GM12878 (cell line): ENCODE measurements at regions of chr5 and their contacts with region 1.

Region 1: GRCh38 chr5:56200856-56201666 is 32.1 kb downstream of the ANKRD55 start:
- DNase-seq: peak; percentile 90
- ATAC-seq: peak; percentile 100
- H3K4me3 ChIP-seq: no peak overlapping the region
- H3K27ac ChIP-seq: no peak overlapping the region
- H3K4me1 ChIP-seq: no peaks in the 10 kb centered on the region
- H3K27me3 ChIP-seq: no peaks in the 10 kb centered on the region
- CTCF ChIP-seq: peak; percentile 74 to 93 (median 78); a peak in 5 of 6 replicates
- EP300 ChIP-seq: no peak
- POLR2A ChIP-seq: no peak
- RAD21 ChIP-seq: peak; percentile 95

Region 2: GRCh38 chr5:55923177-55923771 is 277.8 kb before region 1 on chr5:
- CTCF ChIA-PET with region 1: interaction called, 10 read pairs
- POLR2A ChIA-PET with region 1: no interaction called
- RAD21 ChIA-PET with region 1: no interaction called
- SMC1A ChIA-PET with region 1: interaction called, 4 read pairs
- in situ Hi-C with region 1: no loop called
- intact Hi-C with region 1: no loop called
- DNase-seq: no peak
- ATAC-seq: peak; percentile 40
- H3K4me3 ChIP-seq: peak overlapping the region; percentile 49; the same call in 1 of the 2 replicates
- H3K27ac ChIP-seq: peak overlapping the region; percentile 15; the same call in 1 of the 2 replicates
- H3K4me1 ChIP-seq: peaks cover 17% of the 10 kb centered on the region
- H3K27me3 ChIP-seq: no peaks in the 10 kb centered on the region
- CTCF ChIP-seq: no peak
- EP300 ChIP-seq: no peak
- POLR2A ChIP-seq: no peak
- RAD21 ChIP-seq: no peak

Region 3: GRCh38 chr5:55982957-55983381 is 218.1 kb before region 1 on chr5:
- CTCF ChIA-PET with region 1: interaction called, 122 read pairs
- POLR2A ChIA-PET with region 1: interaction called, 14 read pairs
- RAD21 ChIA-PET with region 1: interaction called, 79 read pairs
- SMC1A ChIA-PET with region 1: interaction called, 110 read pairs
- in situ Hi-C with region 1: no loop called
- intact Hi-C with region 1: loop called (anchors 1 kb)
- DNase-seq: no peak
- ATAC-seq: peak; percentile 28
- H3K4me3 ChIP-seq: no peak overlapping the region
- H3K27ac ChIP-seq: no peak overlapping the region
- H3K4me1 ChIP-seq: peaks cover 1% of the 10 kb centered on the region
- H3K27me3 ChIP-seq: no peaks in the 10 kb centered on the region
- CTCF ChIP-seq: peak in 2 of 3 experiments; percentile 14 to 50; a peak in 3 of 6 replicates
- EP300 ChIP-seq: no peak
- POLR2A ChIP-seq: no peak
- RAD21 ChIP-seq: peak; percentile 38

Region 4: DNA sequence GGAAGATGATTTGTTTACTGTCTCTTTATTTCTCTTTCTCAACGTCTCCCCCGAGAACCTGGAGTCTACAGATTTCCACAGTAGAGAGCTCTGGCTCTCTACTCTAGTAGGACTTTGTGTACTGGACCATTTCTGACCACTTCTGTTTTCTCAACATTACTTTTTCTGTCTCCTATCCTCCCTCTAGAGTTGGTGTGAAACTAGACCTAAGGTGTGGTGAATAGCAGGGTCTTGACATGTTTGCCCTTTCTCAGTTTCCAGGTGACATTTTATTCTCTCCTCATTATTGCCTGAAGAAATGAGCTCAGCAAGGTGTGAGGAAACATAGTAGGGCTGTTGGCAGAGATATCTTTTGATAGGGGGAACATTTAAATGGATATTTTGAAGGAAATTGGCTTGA is 144.2 kb before region 1 on chr5:
- CTCF ChIA-PET with region 1: interaction called, 25 read pairs
- POLR2A ChIA-PET with region 1: no interaction called
- RAD21 ChIA-PET with region 1: interaction called, 9 read pairs
- SMC1A ChIA-PET with region 1: interaction called, 15 read pairs
- in situ Hi-C with region 1: no loop called
- intact Hi-C with region 1: no loop called
- DNase-seq: peak; percentile 85
- ATAC-seq: peak; percentile 78
- H3K4me3 ChIP-seq: 0 out of 2 replicates have a peak overlapping the region, but pooled peaks have one; percentile 8
- H3K27ac ChIP-seq: peak overlapping the region; percentile 47; the same call in 1 of the 2 replicates
- H3K4me1 ChIP-seq: peaks cover 41% of the 10 kb centered on the region
- H3K27me3 ChIP-seq: no peaks in the 10 kb centered on the region
- CTCF ChIP-seq: no peak
- EP300 ChIP-seq: peak in 1 of 2 experiments; percentile 48; a peak in 1 of 4 replicates
- POLR2A ChIP-seq: no peak
- RAD21 ChIP-seq: no peak

Region 5: GRCh38 chr5:56095579-56096102 is 105.4 kb before region 1 on chr5:
- CTCF ChIA-PET with region 1: interaction called, 12 read pairs
- POLR2A ChIA-PET with region 1: no interaction called
- RAD21 ChIA-PET with region 1: interaction called, 17 read pairs
- SMC1A ChIA-PET with region 1: interaction called, 29 read pairs
- in situ Hi-C with region 1: no loop called
- intact Hi-C with region 1: no loop called
- DNase-seq: peak; percentile 96
- ATAC-seq: peak; percentile 87
- H3K4me3 ChIP-seq: no peak overlapping the region
- H3K27ac ChIP-seq: peak overlapping the region; percentile 76
- H3K4me1 ChIP-seq: peaks cover 21% of the 10 kb centered on the region
- H3K27me3 ChIP-seq: no peaks in the 10 kb centered on the region
- CTCF ChIP-seq: no peak
- EP300 ChIP-seq: peak; percentile 79 to 90
- POLR2A ChIP-seq: no peak
- RAD21 ChIP-seq: no peak

Region 6: GRCh38 chr5:56148453-56148971 is 52.5 kb before region 1 on chr5:
- CTCF ChIA-PET with region 1: interaction called, 25 read pairs
- POLR2A ChIA-PET with region 1: interaction called, 11 read pairs
- RAD21 ChIA-PET with region 1: interaction called, 41 read pairs
- SMC1A ChIA-PET with region 1: interaction called, 28 read pairs
- in situ Hi-C with region 1: no loop called
- intact Hi-C with region 1: loop called (anchors 1 kb)
- DNase-seq: peak; percentile 96
- ATAC-seq: peak; percentile 92
- H3K4me3 ChIP-seq: no peak overlapping the region
- H3K27ac ChIP-seq: peak overlapping the region; percentile 54; the same call in 1 of the 2 replicates
- H3K4me1 ChIP-seq: peaks cover 23% of the 10 kb centered on the region
- H3K27me3 ChIP-seq: no peaks in the 10 kb centered on the region; a peak in 1 of 4 replicates
- CTCF ChIP-seq: no peak
- EP300 ChIP-seq: peak; percentile 89 to 92
- POLR2A ChIP-seq: no peak
- RAD21 ChIP-seq: no peak

Region 7: DNA sequence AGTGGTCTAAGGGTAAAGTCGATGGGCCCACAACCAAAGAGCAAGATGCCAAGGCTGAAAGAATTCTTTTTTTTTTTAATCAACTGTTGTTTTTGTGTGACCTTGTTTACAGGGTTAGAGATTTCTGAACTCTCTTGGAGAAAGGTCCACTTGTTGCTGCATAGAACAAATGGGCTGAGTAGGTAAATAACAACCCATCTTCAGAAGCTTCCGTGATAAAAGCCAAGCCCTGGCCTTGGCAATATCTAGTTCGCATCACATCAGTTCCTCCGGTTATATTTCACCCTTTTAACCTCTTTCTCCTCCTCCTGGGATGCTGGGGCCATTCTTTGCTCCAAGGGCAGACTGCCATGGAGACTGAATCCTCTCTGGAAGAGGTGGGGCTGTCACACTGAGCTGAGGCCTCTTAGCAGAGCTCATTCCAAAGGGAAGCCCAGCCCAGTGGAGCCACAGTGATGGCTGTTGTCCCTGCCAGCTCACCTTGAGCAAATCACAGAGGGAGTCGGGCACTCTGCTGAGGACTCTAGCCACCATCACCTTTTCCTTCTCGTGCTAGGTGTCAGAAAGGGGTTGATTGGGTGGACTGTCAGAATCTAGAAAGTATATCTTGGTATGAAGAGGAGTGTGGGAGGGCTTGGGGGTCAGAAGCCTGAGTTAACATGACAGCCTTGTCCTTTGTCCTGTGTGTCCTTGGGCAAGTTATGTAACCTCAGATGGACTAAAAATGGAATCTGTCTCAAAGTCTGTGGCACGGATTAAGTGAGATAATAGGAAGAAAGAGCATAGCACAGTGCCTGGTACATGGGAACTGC is 14.2 kb after region 1 on chr5:
- CTCF ChIA-PET with region 1: no interaction called
- POLR2A ChIA-PET with region 1: no interaction called
- RAD21 ChIA-PET with region 1: no interaction called
- SMC1A ChIA-PET with region 1: no interaction called
- in situ Hi-C with region 1: no loop called
- intact Hi-C with region 1: no loop called
- DNase-seq: no peak
- ATAC-seq: no peak
- H3K4me3 ChIP-seq: no peak overlapping the region
- H3K27ac ChIP-seq: no peak overlapping the region
- H3K4me1 ChIP-seq: no peaks in the 10 kb centered on the region
- H3K27me3 ChIP-seq: no peaks in the 10 kb centered on the region
- CTCF ChIP-seq: no peak
- EP300 ChIP-seq: no peak
- POLR2A ChIP-seq: no peak
- RAD21 ChIP-seq: no peak

Region 8: DNA sequence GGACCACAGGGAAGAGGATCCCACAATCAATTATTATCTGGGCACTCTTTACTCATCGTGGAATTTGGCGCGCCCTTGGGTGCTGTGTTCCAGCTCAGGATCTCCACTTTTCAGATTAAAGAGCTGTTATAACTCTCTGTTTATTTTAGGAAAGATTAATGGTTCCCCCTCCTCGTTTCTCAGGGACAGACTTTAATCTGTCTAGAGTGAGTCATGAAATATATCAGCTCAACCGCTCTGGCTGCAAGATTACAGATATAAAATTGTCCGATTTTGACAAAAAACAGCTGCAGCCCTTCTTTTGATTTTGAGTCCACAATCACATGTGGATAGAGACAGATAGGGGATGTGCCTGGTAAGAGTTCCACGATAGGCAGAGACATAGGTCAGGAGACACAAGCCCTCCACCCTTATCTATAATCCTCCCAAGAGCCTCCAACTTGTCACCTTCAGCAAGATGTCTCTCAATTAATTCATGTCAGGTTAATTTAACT is 109.7 kb after region 1 on chr5:
- CTCF ChIA-PET with region 1: no interaction called
- POLR2A ChIA-PET with region 1: no interaction called
- RAD21 ChIA-PET with region 1: no interaction called
- SMC1A ChIA-PET with region 1: no interaction called
- in situ Hi-C with region 1: no loop called
- intact Hi-C with region 1: no loop called
- DNase-seq: no peak
- ATAC-seq: no peak
- H3K4me3 ChIP-seq: no peak overlapping the region
- H3K27ac ChIP-seq: no peak overlapping the region
- H3K4me1 ChIP-seq: no peaks in the 10 kb centered on the region
- H3K27me3 ChIP-seq: no peaks in the 10 kb centered on the region
- CTCF ChIP-seq: no peak
- EP300 ChIP-seq: no peak
- POLR2A ChIP-seq: no peak
- RAD21 ChIP-seq: no peak

Region 9: DNA sequence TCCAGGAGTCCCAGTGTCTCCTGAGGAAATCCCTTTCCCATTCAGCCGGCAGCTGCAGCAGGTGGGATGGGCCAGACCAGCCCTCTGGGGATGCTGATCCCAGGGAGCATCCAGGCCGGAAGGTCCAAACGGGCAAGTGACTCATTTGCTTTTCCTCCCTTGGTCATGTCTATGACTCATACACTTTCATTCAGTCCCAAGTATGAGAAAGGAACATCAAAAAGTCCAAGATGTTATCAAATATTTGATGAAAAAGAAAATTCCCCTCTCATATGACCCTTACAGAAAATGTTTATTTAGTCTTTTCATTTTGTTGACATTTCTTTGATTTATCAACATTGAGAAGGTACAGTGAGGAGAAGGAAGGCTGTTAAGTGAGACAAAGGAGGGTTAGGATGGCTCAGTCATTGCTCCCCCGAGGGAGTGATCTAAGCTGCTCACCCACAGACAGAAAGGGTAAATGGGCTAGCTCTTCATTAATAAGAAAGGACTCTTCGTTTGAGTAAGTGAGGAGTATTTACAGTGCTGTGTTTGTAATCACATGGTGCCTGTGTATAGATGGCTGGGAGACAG is 149.6 kb after region 1 on chr5:
- CTCF ChIA-PET with region 1: no interaction called
- POLR2A ChIA-PET with region 1: no interaction called
- RAD21 ChIA-PET with region 1: no interaction called
- SMC1A ChIA-PET with region 1: no interaction called
- in situ Hi-C with region 1: no loop called
- intact Hi-C with region 1: no loop called
- DNase-seq: no peak
- ATAC-seq: peak; percentile 34
- H3K4me3 ChIP-seq: no peak overlapping the region
- H3K27ac ChIP-seq: no peak overlapping the region
- H3K4me1 ChIP-seq: no peaks in the 10 kb centered on the region
- H3K27me3 ChIP-seq: no peaks in the 10 kb centered on the region
- CTCF ChIP-seq: no peak
- EP300 ChIP-seq: no peak
- POLR2A ChIP-seq: no peak
- RAD21 ChIP-seq: no peak

Region 10: DNA sequence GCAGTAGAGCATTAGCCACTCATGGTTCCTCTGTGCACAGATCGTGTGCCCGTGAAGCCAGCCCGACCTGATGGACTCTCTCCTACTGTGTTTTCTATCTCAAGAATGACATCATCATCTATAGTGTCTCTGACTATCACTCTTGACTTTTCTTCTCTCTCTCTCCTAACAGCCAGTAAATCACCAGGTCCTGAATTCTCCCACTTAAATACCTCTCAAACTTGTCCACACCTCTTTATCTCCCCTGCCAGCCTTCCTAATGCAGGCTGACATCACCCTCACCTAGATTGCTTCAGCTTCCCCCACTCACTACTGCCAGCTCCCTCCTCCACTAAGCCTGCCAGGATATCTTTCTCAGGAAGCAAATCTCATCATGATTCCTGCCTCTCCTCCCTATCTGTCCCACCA is 841.5 kb after region 1 on chr5:
- CTCF ChIA-PET with region 1: no interaction called
- POLR2A ChIA-PET with region 1: no interaction called
- RAD21 ChIA-PET with region 1: no interaction called
- SMC1A ChIA-PET with region 1: no interaction called
- in situ Hi-C with region 1: no loop called
- intact Hi-C with region 1: no loop called
- DNase-seq: no peak
- ATAC-seq: no peak
- H3K4me3 ChIP-seq: no peak overlapping the region
- H3K27ac ChIP-seq: no peak overlapping the region
- H3K4me1 ChIP-seq: no peaks in the 10 kb centered on the region
- H3K27me3 ChIP-seq: no peaks in the 10 kb centered on the region; a peak in 1 of 4 replicates
- CTCF ChIP-seq: no peak
- EP300 ChIP-seq: no peak
- POLR2A ChIP-seq: no peak
- RAD21 ChIP-seq: no peak